CD8-positive, alpha-beta T cell (primary cell): ENCODE measurements at regions of chr2 and their contacts with region 1.

Region 1: DNA sequence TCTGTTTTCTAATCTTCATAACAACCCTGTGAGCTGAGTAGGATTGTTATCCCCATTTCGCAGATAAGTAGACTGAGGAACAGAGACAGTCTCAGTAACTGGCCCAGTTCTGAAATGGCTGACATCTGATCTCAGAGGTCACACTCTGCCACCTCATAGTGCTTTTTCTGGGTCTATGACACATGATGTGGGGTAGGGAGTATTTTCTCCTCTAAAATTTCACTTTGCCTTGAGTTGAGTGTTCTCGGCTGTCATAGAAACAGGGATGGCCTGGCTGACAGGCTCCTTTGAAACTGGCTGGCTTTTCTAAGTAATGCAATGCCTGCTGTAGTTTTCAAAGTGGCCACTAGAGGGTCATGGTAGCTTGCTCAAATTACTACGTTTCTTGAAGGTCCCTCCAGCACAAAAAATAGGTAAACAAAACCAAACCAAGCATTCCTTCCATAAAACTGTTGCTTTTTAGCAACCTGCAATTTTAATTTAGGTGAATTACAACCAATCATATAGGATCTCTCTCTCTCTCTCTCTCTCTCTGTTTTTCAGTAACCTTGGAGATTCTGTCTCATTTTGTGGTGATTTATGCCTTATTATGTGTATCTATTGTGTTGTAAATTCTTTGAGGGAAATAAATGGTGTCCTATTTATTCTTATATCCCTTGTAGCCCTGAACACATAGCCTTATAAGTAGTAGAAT is 84.2 kb upstream of the TTN start:
- DNase-seq: peak; percentile 9 to 69 (median 55)
- ATAC-seq: peak; percentile 79
- H3K4me3 ChIP-seq: no peak overlapping the region
- H3K4me3 Mint-ChIP-seq: no peak overlapping the region
- H3K27ac ChIP-seq: no peak overlapping the region
- H3K27ac Mint-ChIP-seq: no peak overlapping the region
- H3K4me1 ChIP-seq: no peaks in the 10 kb centered on the region
- H3K4me1 Mint-ChIP-seq: peaks cover 7% of the 10 kb centered on the region
- H3K27me3 ChIP-seq: no peaks in the 10 kb centered on the region
- H3K27me3 Mint-ChIP-seq: no peaks in the 10 kb centered on the region
- CTCF ChIP-seq: peak; percentile 93

Region 2: GRCh38 chr2:177143444-177143843 is 1748.0 kb before region 1 on chr2:
- CTCF ChIA-PET with region 1: no interaction called
- POLR2A ChIA-PET with region 1: no interaction called
- intact Hi-C with region 1: no loop called
- DNase-seq: no peak
- ATAC-seq: no peak
- H3K4me3 ChIP-seq: no peak overlapping the region
- H3K4me3 Mint-ChIP-seq: no peak overlapping the region
- H3K27ac ChIP-seq: no peak overlapping the region
- H3K27ac Mint-ChIP-seq: no peak overlapping the region
- H3K4me1 ChIP-seq: peaks cover 8% of the 10 kb centered on the region
- H3K4me1 Mint-ChIP-seq: peaks cover 11% of the 10 kb centered on the region
- H3K27me3 ChIP-seq: peaks cover 6 to 10% of the 10 kb centered on the region in 2 experiments
- H3K27me3 Mint-ChIP-seq: peaks cover 25% of the 10 kb centered on the region
- CTCF ChIP-seq: no peak

Region 3: GRCh38 chr2:178874529-178875240 is 16.7 kb before region 1 on chr2:
- CTCF ChIA-PET with region 1: interaction called, 14 read pairs
- POLR2A ChIA-PET with region 1: interaction called, 3 read pairs
- intact Hi-C with region 1: no loop called
- DNase-seq: no peak
- ATAC-seq: no peak
- H3K4me3 ChIP-seq: no peak overlapping the region
- H3K4me3 Mint-ChIP-seq: no peak overlapping the region
- H3K27ac ChIP-seq: no peak overlapping the region
- H3K27ac Mint-ChIP-seq: no peak overlapping the region
- H3K4me1 ChIP-seq: no peaks in the 10 kb centered on the region
- H3K4me1 Mint-ChIP-seq: peaks cover 6% of the 10 kb centered on the region
- H3K27me3 ChIP-seq: no peaks in the 10 kb centered on the region
- H3K27me3 Mint-ChIP-seq: no peaks in the 10 kb centered on the region
- CTCF ChIP-seq: no peak

Region 4: DNA sequence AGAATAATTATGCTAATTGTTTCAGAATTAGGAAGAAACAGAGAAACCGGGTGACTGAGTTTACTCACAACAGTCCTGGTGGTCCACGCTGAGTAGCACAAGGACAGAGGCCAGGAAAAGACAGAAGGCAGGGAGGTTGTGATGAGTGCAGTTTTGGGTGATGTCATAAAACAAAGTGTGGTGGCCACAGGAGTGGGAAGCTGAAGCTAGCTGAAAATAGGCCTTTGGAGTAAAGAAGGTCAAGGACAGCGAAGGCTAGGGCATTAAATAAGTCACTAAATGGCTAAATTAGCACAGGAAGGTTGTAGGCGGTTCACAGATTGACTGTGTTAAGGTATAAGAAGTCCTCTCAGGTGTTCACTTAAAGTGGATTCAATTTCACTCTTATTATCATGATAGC is 36.7 kb after region 1 on chr2:
- CTCF ChIA-PET with region 1: no interaction called
- POLR2A ChIA-PET with region 1: no interaction called
- intact Hi-C with region 1: no loop called
- DNase-seq: no peak
- ATAC-seq: no peak
- H3K4me3 ChIP-seq: no peak overlapping the region
- H3K4me3 Mint-ChIP-seq: no peak overlapping the region
- H3K27ac ChIP-seq: no peak overlapping the region
- H3K27ac Mint-ChIP-seq: no peak overlapping the region
- H3K4me1 ChIP-seq: no peaks in the 10 kb centered on the region
- H3K4me1 Mint-ChIP-seq: no peaks in the 10 kb centered on the region
- H3K27me3 ChIP-seq: no peaks in the 10 kb centered on the region
- H3K27me3 Mint-ChIP-seq: no peaks in the 10 kb centered on the region
- CTCF ChIP-seq: no peak

Region 5: GRCh38 chr2:179020156-179020750 is 128.8 kb after region 1 on chr2:
- CTCF ChIA-PET with region 1: no interaction called
- POLR2A ChIA-PET with region 1: no interaction called
- intact Hi-C with region 1: loop called in 1 of 2 experiments (anchors 5 kb)
- DNase-seq: peak in 6 of 9 experiments; percentile 31 to 52 (median 42)
- ATAC-seq: peak; percentile 94
- H3K4me3 ChIP-seq: no peak overlapping the region
- H3K4me3 Mint-ChIP-seq: no peak overlapping the region
- H3K27ac ChIP-seq: no peak overlapping the region
- H3K27ac Mint-ChIP-seq: no peak overlapping the region
- H3K4me1 ChIP-seq: peaks cover 16% of the 10 kb centered on the region
- H3K4me1 Mint-ChIP-seq: peaks cover 36% of the 10 kb centered on the region
- H3K27me3 ChIP-seq: no peaks in the 10 kb centered on the region
- H3K27me3 Mint-ChIP-seq: no peaks in the 10 kb centered on the region
- CTCF ChIP-seq: peak; percentile 31